ENCODE measurements at regions of chr18 and their contacts with region 1.

Region 1: DNA sequence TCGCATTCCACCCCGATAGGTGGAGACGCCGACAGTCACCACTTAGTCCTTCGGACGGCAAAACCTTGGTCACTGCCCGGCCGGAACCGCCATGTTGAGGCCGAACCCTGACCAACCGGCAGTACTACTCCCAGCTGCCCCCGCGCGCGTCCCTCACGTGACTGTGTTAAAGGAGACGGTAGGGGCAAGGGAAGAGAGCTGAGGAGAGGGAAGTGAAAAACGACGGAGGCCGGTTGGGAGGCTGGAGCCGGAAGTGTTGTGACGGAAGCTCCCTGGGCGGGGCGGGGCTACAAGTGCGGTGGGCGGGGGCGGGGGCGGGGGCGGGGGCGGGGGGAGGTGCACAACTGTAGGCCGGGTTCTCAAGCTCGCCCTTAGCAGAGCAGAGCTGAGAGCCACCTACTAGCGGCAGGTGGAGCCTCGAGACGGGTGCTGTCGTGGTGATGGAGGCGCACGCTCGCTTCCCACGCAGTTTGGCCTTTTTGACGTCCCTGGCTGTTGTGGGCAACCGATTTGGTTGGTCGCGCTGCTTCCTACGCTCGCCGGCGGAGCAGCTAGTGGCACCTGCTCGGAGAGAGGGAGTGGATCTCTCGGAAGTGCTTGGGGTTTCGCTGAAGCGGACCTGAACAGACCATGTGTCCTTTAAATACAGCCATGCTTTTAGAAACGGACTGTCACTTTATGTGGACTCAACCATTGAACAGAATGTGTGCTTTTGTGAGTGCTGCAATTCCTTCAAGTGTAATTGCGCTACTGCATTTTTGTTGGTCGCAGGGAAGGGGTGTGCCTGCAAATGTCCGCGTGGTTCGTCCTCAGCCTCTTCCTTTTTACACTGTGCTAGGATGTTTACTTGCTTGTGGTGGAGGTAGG is at the start of gene TRAPPC8:
- DNase-seq: peak; percentile 80
- ATAC-seq: peak; percentile 85
- H3K4me3 ChIP-seq: peak within 1 kb of the TSS; percentile 87
- H3K27ac ChIP-seq: peak within 1 kb of the TSS; percentile 64
- H3K4me1 ChIP-seq: 0 out of 2 replicates have a peak, but pooled peaks cover 6% of the 10 kb centered on the region
- H3K27me3 ChIP-seq: no peaks in the 10 kb centered on the region
- CTCF ChIP-seq: no peak
- total RNA-seq, gene TRAPPC8: 10.2 and 14.7 TPM in 2 replicates

Region 2: DNA sequence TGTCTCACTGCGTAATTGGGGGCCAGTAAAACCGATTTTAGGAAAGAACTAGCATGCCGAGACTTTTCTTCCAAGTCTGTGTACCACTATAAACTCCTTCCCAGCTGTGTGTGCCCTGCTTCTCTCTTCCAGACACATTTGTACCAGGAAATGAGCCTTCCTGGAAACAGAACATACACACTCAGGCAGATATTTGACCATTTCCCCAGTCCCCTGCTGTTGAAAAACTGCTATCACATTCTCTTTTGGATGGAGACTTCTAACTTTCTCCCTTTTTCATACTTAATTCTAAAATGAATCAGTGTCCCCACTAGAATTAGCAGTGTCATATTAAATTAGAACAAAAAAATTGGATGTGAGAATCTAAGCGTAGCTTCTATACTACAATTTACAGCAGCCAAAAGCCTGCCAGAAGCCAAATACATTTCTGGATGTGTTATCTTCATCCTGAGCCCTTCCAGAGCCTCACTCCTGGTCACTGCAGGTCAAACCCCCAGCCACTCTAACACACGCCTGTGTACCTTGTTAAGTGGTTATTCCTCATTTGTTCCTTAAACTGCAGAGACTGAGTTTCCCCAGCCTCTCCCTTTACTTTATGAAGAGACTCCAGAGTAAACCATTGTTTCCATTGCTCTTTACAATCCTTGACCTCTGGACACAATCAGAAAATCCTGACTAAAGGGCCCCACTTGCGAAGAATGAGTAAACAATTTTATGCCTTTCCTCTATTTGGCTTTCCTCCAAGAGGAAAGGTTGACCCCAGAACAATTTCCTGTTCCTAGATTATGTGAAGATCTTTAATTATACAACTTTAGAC is 546.2 kb before region 1 on chr18:
- CTCF ChIA-PET with region 1: no interaction called
- POLR2A ChIA-PET with region 1: no interaction called
- intact Hi-C with region 1: no loop called
- DNase-seq: no peak
- ATAC-seq: no peak
- H3K4me3 ChIP-seq: no peak overlapping the region
- H3K27ac ChIP-seq: no peak overlapping the region
- H3K4me1 ChIP-seq: peaks cover 22% of the 10 kb centered on the region
- H3K27me3 ChIP-seq: no peaks in the 10 kb centered on the region
- CTCF ChIP-seq: no peak

Region 3: DNA sequence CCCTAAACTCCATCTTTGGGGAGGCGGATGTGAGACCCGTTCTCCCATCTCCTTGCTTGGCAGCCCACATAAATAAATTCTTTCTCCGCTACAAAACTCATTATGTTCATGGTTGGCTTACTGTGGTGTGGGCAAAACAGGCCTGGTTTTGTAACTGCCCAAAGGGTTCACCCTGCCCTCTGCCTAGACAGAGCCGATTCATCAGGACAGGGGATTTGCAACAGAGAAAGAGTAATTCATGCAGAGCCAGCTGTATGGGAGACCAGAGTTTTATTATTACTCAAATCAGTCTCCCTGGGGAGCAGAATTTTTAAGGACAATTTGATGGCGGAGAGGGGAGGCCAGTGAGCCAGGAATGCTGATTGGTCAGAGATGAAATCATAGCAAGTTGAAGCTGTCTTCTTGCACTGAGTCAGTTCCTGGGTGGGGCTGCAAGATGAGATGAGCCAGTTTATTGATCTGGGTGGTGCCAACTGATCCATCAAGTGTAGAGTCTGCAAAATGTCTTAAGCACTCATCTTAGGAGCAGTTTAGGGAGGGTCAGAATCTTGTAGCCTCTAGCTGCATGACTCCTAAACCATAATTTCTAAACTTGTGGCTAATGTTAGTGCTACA is 67.0 kb after region 1 on chr18:
- CTCF ChIA-PET with region 1: no interaction called
- POLR2A ChIA-PET with region 1: no interaction called
- intact Hi-C with region 1: no loop called
- DNase-seq: peak; percentile 4
- ATAC-seq: no peak
- H3K4me3 ChIP-seq: no peak overlapping the region
- H3K27ac ChIP-seq: no peak overlapping the region
- H3K4me1 ChIP-seq: no peaks in the 10 kb centered on the region
- H3K27me3 ChIP-seq: no peaks in the 10 kb centered on the region
- CTCF ChIP-seq: no peak

Region 4: GRCh38 chr18:32083781-32084180 is 140.5 kb after region 1 on chr18:
- CTCF ChIA-PET with region 1: no interaction called
- POLR2A ChIA-PET with region 1: no interaction called
- intact Hi-C with region 1: loop called (anchors 2 kb)
- DNase-seq: no peak
- ATAC-seq: no peak
- H3K4me3 ChIP-seq: no peak overlapping the region
- H3K27ac ChIP-seq: no peak overlapping the region
- H3K4me1 ChIP-seq: peaks cover 7% of the 10 kb centered on the region
- H3K27me3 ChIP-seq: no peaks in the 10 kb centered on the region
- CTCF ChIP-seq: no peak

Region 5: DNA sequence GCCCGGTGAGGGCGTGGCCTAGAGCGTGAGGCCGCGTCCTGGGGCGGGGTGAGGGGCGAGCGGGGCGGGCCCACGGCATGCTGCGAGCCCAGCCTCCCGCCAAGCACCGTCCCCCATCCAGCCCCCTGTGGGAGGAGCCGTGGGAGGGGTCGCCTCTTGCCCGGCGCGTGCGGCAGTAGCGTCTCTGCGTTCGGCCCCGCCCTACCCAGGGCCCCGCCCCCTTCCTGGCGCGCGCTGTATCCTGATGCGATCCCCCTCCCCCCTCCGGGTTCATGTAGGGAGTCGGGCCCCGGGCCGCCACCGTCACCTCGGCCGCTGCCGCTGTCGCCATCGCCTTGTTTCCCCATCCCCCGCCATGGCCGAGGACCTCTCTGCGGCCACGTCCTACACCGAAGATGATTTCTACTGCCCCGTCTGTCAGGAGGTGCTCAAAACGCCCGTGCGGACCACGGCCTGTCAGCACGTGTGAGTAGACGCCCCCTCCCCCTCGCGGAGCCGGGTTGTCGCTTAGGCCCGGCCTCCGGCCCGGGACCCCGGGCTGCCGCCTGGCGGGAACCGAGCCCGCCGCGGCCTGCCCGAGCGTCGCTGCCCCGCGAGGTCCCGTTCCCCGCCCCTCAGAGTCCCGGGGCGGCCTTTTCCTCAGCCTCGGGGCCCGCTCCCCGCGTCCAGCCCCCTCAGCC is 149.3 kb after region 1 on chr18:
- CTCF ChIA-PET with region 1: no interaction called
- POLR2A ChIA-PET with region 1: interaction called, 6 read pairs
- intact Hi-C with region 1: loop called (anchors 1 kb)
- DNase-seq: peak; percentile 82
- ATAC-seq: peak; percentile 90
- H3K4me3 ChIP-seq: peak overlapping the region; percentile 82
- H3K27ac ChIP-seq: peak overlapping the region; percentile 79; the same call in 1 of the 2 replicates
- H3K4me1 ChIP-seq: peaks cover 3% of the 10 kb centered on the region; the same call in 1 of the 2 replicates
- H3K27me3 ChIP-seq: no peaks in the 10 kb centered on the region
- CTCF ChIP-seq: no peak

Measured in PC-3 (cell line).